Heart right ventricle (tissue), 16 donors: ENCODE measurements at regions of chr1 and their contacts with region 1.

Region 1: DNA sequence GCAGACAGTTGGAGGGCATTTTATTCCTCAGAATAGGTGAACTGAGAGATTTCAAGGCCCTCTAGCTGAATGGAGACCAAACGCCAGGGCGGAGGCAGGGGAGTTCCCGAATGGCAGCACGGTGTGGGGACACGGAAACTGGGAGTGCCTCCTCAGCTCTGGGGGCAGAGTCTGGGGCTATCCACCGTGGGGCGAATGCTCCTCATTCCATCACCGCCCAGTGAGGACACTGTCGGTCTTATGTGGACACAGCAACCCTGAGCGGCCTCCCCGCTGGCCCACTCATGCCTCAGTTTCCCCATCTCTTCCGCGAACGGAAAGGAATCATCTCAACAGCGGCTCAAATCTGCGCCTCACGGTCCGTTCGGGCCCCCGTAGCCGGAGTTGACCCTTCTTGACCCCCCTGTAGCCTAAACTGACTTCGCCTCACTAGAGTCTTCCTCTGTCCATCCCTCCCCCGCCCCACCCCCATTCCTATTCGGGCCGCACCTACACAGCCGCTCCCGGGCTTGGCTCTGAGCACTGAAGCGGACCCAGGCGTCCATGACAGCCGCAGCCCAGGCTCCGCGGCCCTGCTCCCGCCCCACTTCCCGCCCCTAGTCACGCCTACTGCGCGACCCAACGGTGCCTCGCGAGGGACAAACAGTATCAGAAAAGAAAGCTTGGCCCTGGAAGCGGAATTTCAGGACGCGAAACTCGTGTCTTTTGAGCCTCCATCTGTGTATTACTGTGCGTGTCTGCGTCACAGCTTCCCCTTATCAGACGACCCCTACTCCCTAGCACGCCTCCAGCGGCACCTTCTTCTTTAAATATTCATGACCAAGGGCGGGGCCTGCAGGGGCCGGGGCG is at the start of gene PEX11B:
- DNase-seq: peak; percentile 88 to 91
- ATAC-seq: peak; percentile 94 to 98 (median 96)
- H3K4me3 ChIP-seq: peak within 1 kb of the TSS; percentile 73 to 99 (median 90)
- H3K27ac ChIP-seq: peak within 1 kb of the TSS; percentile 79 to 95 (median 90)
- H3K4me1 ChIP-seq: peaks cover 3 to 34% (median 26%) of the 10 kb centered on the region in 9 donors
- H3K27me3 ChIP-seq: no peaks in the 10 kb centered on the region
- CTCF ChIP-seq: peak in 1 of 9 donors; percentile 15
- total RNA-seq, gene PEX11B: 20.4 to 26.3 (median 23.0) TPM

Region 2: DNA sequence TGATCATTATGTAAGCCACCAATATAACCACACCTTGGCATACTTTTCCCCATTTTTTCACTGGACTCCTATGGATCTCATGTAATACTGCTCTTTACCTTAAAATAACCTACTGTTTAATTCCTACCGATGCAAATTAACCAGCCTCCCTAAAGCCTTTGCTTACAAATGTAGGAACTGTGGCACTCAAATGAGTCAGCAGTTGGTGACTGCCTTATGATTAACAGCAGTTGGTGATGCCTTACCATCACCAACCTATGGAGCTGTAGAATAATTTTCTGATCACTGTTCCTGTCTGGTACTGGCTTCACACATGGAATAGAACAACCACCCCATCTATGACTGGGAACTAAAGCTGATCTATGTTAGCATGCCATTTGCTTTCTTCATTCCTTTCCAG is 80.7 kb before region 1 on chr1:
- intact Hi-C with region 1: loop called in 3 of 10 experiments (anchors 5 to 10 kb)
- DNase-seq: no peak
- ATAC-seq: no peak
- H3K4me3 ChIP-seq: no peak overlapping the region
- H3K27ac ChIP-seq: no peak overlapping the region
- H3K4me1 ChIP-seq: no peaks in the 10 kb centered on the region
- H3K27me3 ChIP-seq: no peaks in the 10 kb centered on the region
- CTCF ChIP-seq: no peak

Region 3: GRCh38 chr1:145957443-145958319 is 39.3 kb after region 1 on chr1 and contains the start of gene LIX1L:
- intact Hi-C with region 1: loop called in 5 of 10 experiments (anchors 5 kb)
- DNase-seq: peak; percentile 96 to 98
- ATAC-seq: peak; percentile 84 to 90 (median 88)
- H3K4me3 ChIP-seq: peak within 1 kb of the TSS; percentile 56 to 88 (median 68)
- H3K27ac ChIP-seq: peak within 1 kb of the TSS; percentile 92 to 100 (median 98)
- H3K4me1 ChIP-seq: peaks cover 5 to 84% (median 74%) of the 10 kb centered on the region in 9 donors
- H3K27me3 ChIP-seq: peaks cover 0 to 9% (median 0%) of the 10 kb centered on the region in 7 donors
- CTCF ChIP-seq: no peak
- total RNA-seq, gene LIX1L: 21.2 to 30.0 (median 24.5) TPM

Region 4: DNA sequence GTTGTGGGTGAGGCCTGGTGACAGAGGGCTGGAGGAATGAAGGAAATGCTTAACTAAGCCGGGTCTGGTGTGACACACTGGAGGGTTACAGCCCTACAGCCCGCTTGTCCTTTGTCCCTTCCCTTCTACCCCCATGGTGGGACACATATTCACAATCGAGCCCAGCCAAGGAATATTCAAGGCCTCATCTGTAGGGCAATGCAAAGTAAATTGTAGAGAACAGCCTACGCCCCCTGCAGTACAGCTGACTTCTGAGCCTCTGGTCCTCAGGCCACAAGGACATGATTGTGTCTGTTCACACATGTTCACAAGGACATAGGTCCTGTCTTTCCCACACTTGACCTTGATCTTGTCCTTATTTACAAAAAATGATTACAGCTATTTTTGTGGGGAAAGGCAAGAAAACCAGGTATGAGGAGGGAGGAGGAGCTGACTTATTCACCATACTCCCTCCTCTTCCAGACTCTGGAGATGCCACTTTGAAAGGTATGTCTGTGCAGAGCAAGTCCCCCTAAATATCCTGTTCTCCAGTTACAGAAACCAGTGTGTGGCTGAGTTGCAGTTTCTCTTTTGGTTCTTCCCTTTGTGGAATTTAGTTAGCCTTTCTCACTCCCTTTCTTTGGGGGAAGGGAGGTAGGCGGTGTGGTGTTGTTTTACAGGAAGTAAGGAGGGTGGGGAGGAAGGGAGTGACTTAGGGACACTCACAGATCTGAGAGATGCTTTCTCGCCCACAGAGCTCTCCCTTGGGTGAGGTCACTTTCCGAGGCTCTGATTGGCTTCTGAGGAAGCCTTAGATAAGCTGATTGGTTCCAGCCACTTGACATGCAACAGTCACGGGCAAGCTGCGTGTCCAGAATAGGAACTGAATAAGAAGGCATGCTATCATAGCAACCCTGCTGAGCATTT is 60.7 kb after region 1 on chr1:
- intact Hi-C with region 1: no loop called
- DNase-seq: peak; percentile 81 to 98
- ATAC-seq: peak; percentile 91 to 94 (median 92)
- H3K4me3 ChIP-seq: peak overlapping the region in 8 of 10 donors; percentile 4 to 44 (median 38)
- H3K27ac ChIP-seq: peak overlapping the region; percentile 90 to 97 (median 94)
- H3K4me1 ChIP-seq: peaks cover 46 to 70% (median 68%) of the 10 kb centered on the region in 9 donors
- H3K27me3 ChIP-seq: no peaks in the 10 kb centered on the region
- CTCF ChIP-seq: peak in 5 of 9 donors; percentile 25 to 58 (median 45)

Region 5: DNA sequence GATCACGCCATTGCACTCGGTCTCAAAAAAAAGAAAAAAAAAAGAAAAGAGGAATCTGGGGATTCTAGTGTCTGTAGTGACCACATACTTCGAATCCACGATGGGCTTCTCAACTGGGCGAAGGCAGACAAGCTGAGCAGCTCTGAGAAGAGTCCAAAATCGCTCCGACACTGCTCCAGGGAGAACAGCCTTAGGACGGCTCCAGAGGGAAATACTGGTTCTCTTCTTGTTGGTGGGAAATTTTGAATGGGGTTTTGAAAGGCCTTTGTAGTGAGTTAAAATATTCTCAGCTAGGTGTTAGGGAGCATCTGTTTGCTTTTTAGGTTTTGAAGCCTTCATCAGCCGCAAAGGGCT is 121.5 kb after region 1 on chr1:
- intact Hi-C with region 1: no loop called
- DNase-seq: no peak
- ATAC-seq: no peak
- H3K4me3 ChIP-seq: peak overlapping the region in 7 of 10 donors; percentile 62 to 76 (median 68)
- H3K27ac ChIP-seq: peak overlapping the region in 7 of 10 donors; percentile 6 to 91 (median 87)
- H3K4me1 ChIP-seq: peaks cover 0 to 42% (median 9%) of the 10 kb centered on the region in 9 donors
- H3K27me3 ChIP-seq: no peaks in the 10 kb centered on the region
- CTCF ChIP-seq: no peak